ENCODE measurements at regions of chr17 and their contacts with region 1.

Region 1: GRCh38 chr17:40317880-40318829 is 9.2 kb downstream of the RARA start:
- DNase-seq: peak; percentile 81 to 91 (median 90)
- ATAC-seq: peak; percentile 76
- H3K4me3 ChIP-seq: peak overlapping the region; percentile 55
- H3K4me3 Mint-ChIP-seq: peak overlapping the region; percentile 89 to 98 (median 97)
- H3K27ac ChIP-seq: peak overlapping the region; percentile 96
- H3K27ac Mint-ChIP-seq: peak overlapping the region; percentile 98 to 100 (median 99)
- H3K4me1 ChIP-seq: peaks cover 49 to 68% of the 10 kb centered on the region in 2 donors
- H3K4me1 Mint-ChIP-seq: peaks cover 32 to 88% (median 74%) of the 10 kb centered on the region in 7 donors
- H3K27me3 ChIP-seq: no peaks in the 10 kb centered on the region
- H3K27me3 Mint-ChIP-seq: peaks cover 0 to 8% (median 0%) of the 10 kb centered on the region in 5 donors

Region 2: DNA sequence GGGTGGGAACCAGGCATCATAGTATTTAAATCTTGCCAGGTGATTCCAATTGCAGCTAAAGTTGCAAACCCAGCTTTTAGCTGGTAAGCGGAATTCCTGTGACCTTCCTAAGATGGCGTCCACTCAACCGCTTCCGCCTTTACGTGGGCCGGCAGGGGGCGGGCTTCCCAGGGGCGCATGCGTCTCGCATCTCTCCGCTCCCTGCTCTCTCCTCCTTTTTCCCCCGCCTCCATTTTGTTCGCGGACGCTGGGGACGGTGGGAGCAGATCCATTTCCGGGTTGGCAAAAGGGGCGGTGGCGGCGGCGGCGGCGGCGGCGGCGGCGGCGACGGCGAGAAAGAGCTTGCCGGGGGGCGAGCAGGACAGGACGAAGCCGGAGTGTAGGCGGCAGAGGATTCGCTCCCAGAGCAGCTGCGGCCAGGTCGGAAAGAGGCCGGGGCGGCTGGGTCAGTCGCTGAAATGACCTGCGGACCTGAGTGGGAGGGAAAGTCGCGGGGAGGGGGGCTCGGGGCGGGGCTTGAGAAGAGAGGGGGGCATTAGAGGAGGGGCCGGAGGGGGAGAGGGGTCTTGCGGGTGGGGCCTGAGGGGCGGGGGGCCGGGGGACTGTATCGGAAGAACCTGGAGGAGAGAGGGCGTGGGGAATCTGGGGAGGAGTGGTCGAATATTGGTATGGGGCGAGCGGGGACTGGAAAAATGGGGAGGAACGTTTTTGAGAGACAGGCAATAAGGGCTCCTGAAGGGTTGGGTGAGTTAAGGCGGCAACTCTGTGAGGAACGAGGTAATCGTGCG is 98.9 kb before region 1 on chr17 and contains the start of gene WIPF2:
- CTCF ChIA-PET with region 1: no interaction called
- POLR2A ChIA-PET with region 1: no interaction called
- intact Hi-C with region 1: loop called in 1 of 2 experiments (anchors 1 kb)
- DNase-seq: peak; percentile 88 to 97 (median 95)
- ATAC-seq: peak; percentile 96
- H3K4me3 ChIP-seq: peak within 1 kb of the TSS; percentile 74
- H3K4me3 Mint-ChIP-seq: peak within 1 kb of the TSS; percentile 86 to 100 (median 96)
- H3K27ac ChIP-seq: peak within 1 kb of the TSS; percentile 92
- H3K27ac Mint-ChIP-seq: peak within 1 kb of the TSS; percentile 96 to 100 (median 100)
- H3K4me1 ChIP-seq: peaks cover 9 to 10% of the 10 kb centered on the region in 2 donors
- H3K4me1 Mint-ChIP-seq: peaks cover 25 to 44% (median 32%) of the 10 kb centered on the region in 7 donors
- H3K27me3 ChIP-seq: no peaks in the 10 kb centered on the region
- H3K27me3 Mint-ChIP-seq: no peaks in the 10 kb centered on the region
- total RNA-seq, gene WIPF2: 24.8 to 31.8 (median 28.6) TPM

Region 3: DNA sequence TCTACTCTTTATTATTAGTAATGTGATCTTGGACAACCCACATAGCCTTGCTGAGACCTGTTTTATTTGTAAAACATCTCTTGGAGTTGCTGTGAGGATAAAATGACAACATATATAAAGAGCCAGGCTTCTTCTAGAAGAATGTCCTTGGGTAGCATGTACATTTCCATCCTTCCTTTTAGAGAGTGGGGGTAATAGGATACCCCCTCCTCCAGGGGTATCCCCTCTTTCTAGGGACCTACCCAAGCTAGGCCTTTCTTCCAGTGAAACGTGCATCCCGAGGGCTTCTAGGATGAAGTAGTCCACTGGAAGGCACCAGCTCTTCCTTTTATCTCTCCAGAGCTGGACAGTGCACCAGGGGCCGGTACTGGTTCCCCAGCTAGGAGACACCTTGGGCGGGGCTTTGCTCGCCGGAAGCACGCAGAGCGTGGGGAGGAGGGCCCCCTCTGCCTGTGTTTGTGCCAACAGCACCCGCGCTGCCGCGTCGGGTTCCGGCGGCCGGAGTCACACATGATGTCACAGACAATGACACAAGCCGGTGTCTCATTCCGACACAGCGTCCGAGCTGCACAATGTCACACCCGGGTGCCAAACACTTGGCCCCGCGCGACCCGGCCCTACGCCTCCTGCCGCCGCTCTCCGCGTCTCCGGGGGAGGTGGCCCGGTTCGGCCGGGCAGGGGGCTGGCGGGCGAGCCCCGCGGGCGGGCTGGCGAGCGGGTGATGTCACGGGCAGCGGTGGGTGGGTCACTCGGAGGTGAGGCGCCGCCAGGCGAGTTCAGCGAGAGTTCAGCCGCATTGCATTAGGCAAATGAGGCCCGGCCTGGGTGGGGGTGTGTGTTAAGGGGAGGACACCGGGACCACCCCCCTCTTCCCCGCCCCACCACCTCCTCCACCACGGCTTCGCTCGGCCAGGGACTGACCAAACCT is 23.0 kb after region 1 on chr17:
- CTCF ChIA-PET with region 1: interaction called, 10 read pairs
- POLR2A ChIA-PET with region 1: interaction called, 742 read pairs
- intact Hi-C with region 1: loop called (anchors 1 kb)
- DNase-seq: peak; percentile 78 to 92 (median 85)
- ATAC-seq: peak; percentile 88
- H3K4me3 ChIP-seq: peak overlapping the region; percentile 73
- H3K4me3 Mint-ChIP-seq: peak overlapping the region; percentile 71 to 89 (median 82)
- H3K27ac ChIP-seq: peak overlapping the region; percentile 90
- H3K27ac Mint-ChIP-seq: peak overlapping the region; percentile 84 to 98 (median 96)
- H3K4me1 ChIP-seq: peaks cover 53 to 54% of the 10 kb centered on the region in 2 donors
- H3K4me1 Mint-ChIP-seq: peaks cover 46 to 80% (median 72%) of the 10 kb centered on the region in 7 donors
- H3K27me3 ChIP-seq: no peaks in the 10 kb centered on the region
- H3K27me3 Mint-ChIP-seq: no peaks in the 10 kb centered on the region

Region 4: GRCh38 chr17:40371261-40371929 is 53.2 kb after region 1 on chr17:
- CTCF ChIA-PET with region 1: no interaction called
- POLR2A ChIA-PET with region 1: no interaction called
- intact Hi-C with region 1: no loop called
- DNase-seq: peak in 5 of 9 donors; percentile 24 to 45 (median 41)
- ATAC-seq: peak; percentile 77
- H3K4me3 ChIP-seq: no peak overlapping the region
- H3K4me3 Mint-ChIP-seq: no peak overlapping the region
- H3K27ac ChIP-seq: no peak overlapping the region
- H3K27ac Mint-ChIP-seq: peak overlapping the region in 2 of 9 donors; percentile 25 to 76
- H3K4me1 ChIP-seq: no peaks in the 10 kb centered on the region
- H3K4me1 Mint-ChIP-seq: peaks cover 0 to 23% (median 0%) of the 10 kb centered on the region in 7 donors
- H3K27me3 ChIP-seq: no peaks in the 10 kb centered on the region
- H3K27me3 Mint-ChIP-seq: no peaks in the 10 kb centered on the region

Region 5: GRCh38 chr17:40480501-40481003 is 162.4 kb after region 1 on chr17:
- CTCF ChIA-PET with region 1: no interaction called
- POLR2A ChIA-PET with region 1: no interaction called
- intact Hi-C with region 1: loop called in 1 of 2 experiments (anchors 1 kb)
- DNase-seq: peak; percentile 59 to 96 (median 92)
- ATAC-seq: peak; percentile 94
- H3K4me3 ChIP-seq: peak overlapping the region; percentile 5
- H3K4me3 Mint-ChIP-seq: peak overlapping the region; percentile 64 to 83 (median 73)
- H3K27ac ChIP-seq: peak overlapping the region; percentile 76
- H3K27ac Mint-ChIP-seq: peak overlapping the region; percentile 93 to 100 (median 98)
- H3K4me1 ChIP-seq: peaks cover 24 to 48% of the 10 kb centered on the region in 2 donors
- H3K4me1 Mint-ChIP-seq: peaks cover 31 to 84% (median 64%) of the 10 kb centered on the region in 7 donors
- H3K27me3 ChIP-seq: no peaks in the 10 kb centered on the region
- H3K27me3 Mint-ChIP-seq: no peaks in the 10 kb centered on the region

Region 6: GRCh38 chr17:40598663-40599467 is 280.7 kb after region 1 on chr17:
- CTCF ChIA-PET with region 1: no interaction called
- POLR2A ChIA-PET with region 1: interaction called, 3 read pairs
- intact Hi-C with region 1: loop called in 1 of 2 experiments (anchors 2 kb)
- DNase-seq: peak in 8 of 9 donors; percentile 67 to 93 (median 80)
- ATAC-seq: peak; percentile 80
- H3K4me3 ChIP-seq: peak overlapping the region; percentile 25
- H3K4me3 Mint-ChIP-seq: peak overlapping the region; percentile 53 to 88 (median 76)
- H3K27ac ChIP-seq: peak overlapping the region; percentile 94
- H3K27ac Mint-ChIP-seq: peak overlapping the region; percentile 95 to 100 (median 99)
- H3K4me1 ChIP-seq: peaks cover 62 to 98% of the 10 kb centered on the region in 2 donors
- H3K4me1 Mint-ChIP-seq: peaks cover 64 to 100% (median 96%) of the 10 kb centered on the region in 7 donors
- H3K27me3 ChIP-seq: no peaks in the 10 kb centered on the region
- H3K27me3 Mint-ChIP-seq: no peaks in the 10 kb centered on the region